CD8-positive, alpha-beta T cell (primary cell): ENCODE measurements at regions of chr11 and their contacts with region 1.

Region 1: GRCh38 chr11:128172046-128172878 is 415.1 kb downstream of the ETS1 start:
- DNase-seq: peak; percentile 76 to 91 (median 86)
- ATAC-seq: peak; percentile 89
- H3K4me3 ChIP-seq: no peak overlapping the region
- H3K4me3 Mint-ChIP-seq: no peak overlapping the region
- H3K27ac ChIP-seq: no peak overlapping the region
- H3K27ac Mint-ChIP-seq: no peak overlapping the region
- H3K4me1 ChIP-seq: no peaks in the 10 kb centered on the region
- H3K4me1 Mint-ChIP-seq: peaks cover 3% of the 10 kb centered on the region
- H3K27me3 ChIP-seq: no peaks in the 10 kb centered on the region
- H3K27me3 Mint-ChIP-seq: no peaks in the 10 kb centered on the region
- CTCF ChIP-seq: peak; percentile 88

Region 2: GRCh38 chr11:128039140-128040021 is 132.9 kb before region 1 on chr11:
- CTCF ChIA-PET with region 1: interaction called, 25 read pairs
- POLR2A ChIA-PET with region 1: no interaction called
- intact Hi-C with region 1: no loop called
- DNase-seq: peak; percentile 48 to 94 (median 79)
- ATAC-seq: peak; percentile 91
- H3K4me3 ChIP-seq: peak overlapping the region; percentile 40 to 50
- H3K4me3 Mint-ChIP-seq: peak overlapping the region; percentile 59
- H3K27ac ChIP-seq: peak overlapping the region; percentile 55 to 80
- H3K27ac Mint-ChIP-seq: peak overlapping the region; percentile 87
- H3K4me1 ChIP-seq: peaks cover 76% of the 10 kb centered on the region
- H3K4me1 Mint-ChIP-seq: peaks cover 56% of the 10 kb centered on the region
- H3K27me3 ChIP-seq: no peaks in the 10 kb centered on the region
- H3K27me3 Mint-ChIP-seq: no peaks in the 10 kb centered on the region
- CTCF ChIP-seq: peak; percentile 22

Region 3: DNA sequence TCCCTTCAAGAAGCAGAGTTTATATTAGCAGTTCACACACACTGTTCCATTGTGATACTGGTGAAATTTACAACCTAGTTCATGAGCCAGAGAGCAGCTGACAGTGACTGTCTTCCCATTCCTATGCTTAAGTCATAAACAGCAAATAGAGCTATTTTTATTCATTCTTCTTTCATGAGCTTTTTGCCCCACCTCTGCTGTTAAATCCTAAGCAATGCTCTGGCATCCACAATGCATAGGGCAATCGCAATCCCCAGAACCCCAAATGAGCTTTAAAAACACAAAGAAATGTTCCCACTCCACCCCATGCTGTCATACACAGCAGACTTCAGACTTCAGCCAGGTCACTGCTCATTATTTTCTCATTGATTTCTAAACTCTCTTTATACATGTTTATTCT is 107.6 kb after region 1 on chr11:
- CTCF ChIA-PET with region 1: interaction called, 16 read pairs
- POLR2A ChIA-PET with region 1: no interaction called
- intact Hi-C with region 1: no loop called
- DNase-seq: no peak
- ATAC-seq: no peak
- H3K4me3 ChIP-seq: no peak overlapping the region
- H3K4me3 Mint-ChIP-seq: no peak overlapping the region
- H3K27ac ChIP-seq: no peak overlapping the region
- H3K27ac Mint-ChIP-seq: no peak overlapping the region
- H3K4me1 ChIP-seq: peaks cover 6% of the 10 kb centered on the region
- H3K4me1 Mint-ChIP-seq: peaks cover 13% of the 10 kb centered on the region
- H3K27me3 ChIP-seq: no peaks in the 10 kb centered on the region
- H3K27me3 Mint-ChIP-seq: no peaks in the 10 kb centered on the region
- CTCF ChIP-seq: no peak

Region 4: GRCh38 chr11:128766591-128767081 is 594.4 kb after region 1 on chr11:
- CTCF ChIA-PET with region 1: interaction called, 12 read pairs
- POLR2A ChIA-PET with region 1: no interaction called
- intact Hi-C with region 1: no loop called
- DNase-seq: no peak
- ATAC-seq: no peak
- H3K4me3 ChIP-seq: no peak overlapping the region
- H3K4me3 Mint-ChIP-seq: no peak overlapping the region
- H3K27ac ChIP-seq: no peak overlapping the region
- H3K27ac Mint-ChIP-seq: no peak overlapping the region
- H3K4me1 ChIP-seq: peaks cover 15% of the 10 kb centered on the region
- H3K4me1 Mint-ChIP-seq: peaks cover 36% of the 10 kb centered on the region
- H3K27me3 ChIP-seq: no peaks in the 10 kb centered on the region
- H3K27me3 Mint-ChIP-seq: no peaks in the 10 kb centered on the region
- CTCF ChIP-seq: no peak

Region 5: GRCh38 chr11:128859563-128860441 is 687.5 kb after region 1 on chr11:
- CTCF ChIA-PET with region 1: interaction called, 30 read pairs
- POLR2A ChIA-PET with region 1: no interaction called
- intact Hi-C with region 1: loop called (anchors 1 kb)
- DNase-seq: peak; percentile 64 to 83 (median 75)
- ATAC-seq: peak; percentile 97
- H3K4me3 ChIP-seq: no peak overlapping the region
- H3K4me3 Mint-ChIP-seq: no peak overlapping the region
- H3K27ac ChIP-seq: no peak overlapping the region
- H3K27ac Mint-ChIP-seq: no peak overlapping the region
- H3K4me1 ChIP-seq: no peaks in the 10 kb centered on the region
- H3K4me1 Mint-ChIP-seq: peaks cover 4% of the 10 kb centered on the region
- H3K27me3 ChIP-seq: no peaks in the 10 kb centered on the region
- H3K27me3 Mint-ChIP-seq: peaks cover 2% of the 10 kb centered on the region
- CTCF ChIP-seq: peak; percentile 99